Transverse colon (tissue), 4 donors: ENCODE measurements at regions of chr7 and their contacts with region 1.

Region 1: GRCh38 chr7:8724080-8724718 is 290.8 kb downstream of the NXPH1 start:
- DNase-seq: peak; percentile 42
- H3K4me3 ChIP-seq: no peak overlapping the region
- H3K27ac ChIP-seq: no peak overlapping the region
- H3K4me1 ChIP-seq: no peaks in the 10 kb centered on the region
- H3K27me3 ChIP-seq: no peaks in the 10 kb centered on the region
- CTCF ChIP-seq: peak; percentile 32 to 61 (median 56)
- EP300 ChIP-seq: no peak
- POLR2A ChIP-seq: no peak

Region 2: GRCh38 chr7:8436965-8437364 is 287.2 kb before region 1 on chr7:
- in situ Hi-C with region 1: loop called in 2 of 4 experiments (anchors 25 kb)
- intact Hi-C with region 1: no loop called
- DNase-seq: peak; percentile 57
- H3K4me3 ChIP-seq: no peak overlapping the region
- H3K27ac ChIP-seq: no peak overlapping the region
- H3K4me1 ChIP-seq: peaks cover 0 to 11% (median 0%) of the 10 kb centered on the region in 4 donors
- H3K27me3 ChIP-seq: peaks cover 100% of the 10 kb centered on the region
- CTCF ChIP-seq: peak; percentile 41 to 76 (median 62)
- EP300 ChIP-seq: no peak
- POLR2A ChIP-seq: no peak

Region 3: DNA sequence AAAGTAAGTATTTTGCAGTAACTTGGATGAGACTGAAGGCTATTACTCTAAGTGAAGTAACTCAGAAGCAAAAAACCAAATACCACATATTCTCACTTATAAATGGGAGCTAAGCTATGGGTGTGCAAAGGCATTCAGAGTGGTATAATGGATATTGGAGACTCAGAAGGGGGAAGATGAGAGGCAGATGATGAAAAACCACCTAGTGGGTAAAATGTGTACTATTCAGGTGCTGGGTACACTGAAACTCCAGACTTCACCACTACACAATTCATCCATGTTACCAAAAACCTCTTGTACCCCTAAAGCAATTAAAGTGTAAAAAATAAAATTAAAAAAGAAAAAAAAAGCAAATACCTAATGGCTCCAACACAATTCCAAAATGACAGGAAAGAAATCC is 60.9 kb after region 1 on chr7:
- in situ Hi-C with region 1: no loop called
- intact Hi-C with region 1: no loop called
- DNase-seq: no peak
- H3K4me3 ChIP-seq: no peak overlapping the region
- H3K27ac ChIP-seq: no peak overlapping the region
- H3K4me1 ChIP-seq: no peaks in the 10 kb centered on the region
- H3K27me3 ChIP-seq: no peaks in the 10 kb centered on the region
- CTCF ChIP-seq: no peak
- EP300 ChIP-seq: no peak
- POLR2A ChIP-seq: no peak